Colonic mucosa (tissue), 4 donors: ENCODE measurements at regions of chr20 and their contacts with region 1.

Region 1: DNA sequence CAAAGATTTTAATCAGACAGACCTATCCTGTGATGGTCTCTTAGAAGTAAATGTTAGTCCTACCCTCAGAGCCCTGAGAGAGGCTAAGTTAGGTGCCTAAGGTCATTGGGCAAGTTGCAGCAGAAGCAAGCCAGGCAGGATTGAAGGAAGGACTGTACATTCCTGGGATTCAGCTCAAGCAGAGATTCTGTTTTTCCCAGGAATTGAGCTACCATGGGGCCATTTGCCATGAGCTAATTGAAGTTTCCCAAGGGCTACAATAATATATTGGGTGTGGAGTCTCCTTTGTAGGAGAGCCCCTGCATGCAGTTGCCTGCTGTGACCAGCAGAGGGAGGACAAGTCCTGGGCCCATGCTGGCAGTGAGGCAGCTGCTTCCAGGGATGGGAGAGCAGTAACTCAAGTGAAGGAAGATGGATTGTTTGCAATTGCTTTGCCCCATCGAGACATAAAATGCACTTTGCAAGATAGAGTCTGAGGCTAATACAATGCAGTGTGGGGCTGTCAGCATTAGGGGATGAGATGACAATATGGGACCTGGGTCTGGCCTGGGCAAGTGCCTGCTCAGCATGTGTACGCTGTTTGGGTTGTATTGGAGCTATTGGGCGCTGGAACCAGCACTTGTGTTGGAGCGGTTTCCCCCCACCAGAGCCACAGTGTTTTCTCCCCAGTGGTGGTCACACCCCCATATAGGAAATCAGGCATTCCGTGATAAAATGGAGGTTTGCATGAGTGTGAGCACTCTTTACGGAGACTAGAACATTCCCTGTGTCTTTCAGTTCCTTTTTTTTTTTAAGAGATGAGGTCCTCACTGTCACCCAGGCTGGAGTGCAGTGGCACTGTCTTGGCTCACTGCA is 27.9 kb downstream of the DNMT3B start:
- DNase-seq: peak; percentile 77
- H3K4me3 ChIP-seq: no peak overlapping the region
- H3K27ac ChIP-seq: no peak overlapping the region
- H3K4me1 ChIP-seq: no peaks in the 10 kb centered on the region
- H3K27me3 ChIP-seq: no peaks in the 10 kb centered on the region
- CTCF ChIP-seq: peak; percentile 100

Region 2: DNA sequence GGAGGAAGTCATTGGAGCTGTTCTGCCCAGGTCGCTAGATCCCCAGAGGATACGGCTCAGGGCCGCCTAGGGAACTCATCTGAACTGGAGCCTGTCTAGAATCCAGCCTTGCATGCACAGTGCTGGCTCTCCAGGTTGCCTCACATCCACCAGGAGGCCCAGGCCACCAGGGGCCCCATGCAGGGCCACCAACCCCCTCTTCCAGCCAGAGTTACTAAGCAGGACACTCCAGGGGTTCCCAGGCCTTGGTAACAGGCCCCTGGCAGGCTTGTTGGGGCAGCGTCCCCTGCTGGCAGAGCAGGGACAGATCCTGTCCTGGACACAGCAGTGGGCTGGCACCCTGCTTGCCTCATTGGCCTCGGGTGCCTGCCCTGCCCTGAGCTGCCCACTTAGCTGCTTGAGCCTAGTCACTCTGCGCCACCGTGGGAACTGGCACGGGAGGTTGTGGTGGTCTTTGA is 103.9 kb after region 1 on chr20:
- intact Hi-C with region 1: loop called (anchors 10 kb)
- DNase-seq: no peak
- H3K4me3 ChIP-seq: no peak overlapping the region
- H3K27ac ChIP-seq: no peak overlapping the region
- H3K4me1 ChIP-seq: no peaks in the 10 kb centered on the region
- H3K27me3 ChIP-seq: no peaks in the 10 kb centered on the region
- CTCF ChIP-seq: peak; percentile 27

Region 3: DNA sequence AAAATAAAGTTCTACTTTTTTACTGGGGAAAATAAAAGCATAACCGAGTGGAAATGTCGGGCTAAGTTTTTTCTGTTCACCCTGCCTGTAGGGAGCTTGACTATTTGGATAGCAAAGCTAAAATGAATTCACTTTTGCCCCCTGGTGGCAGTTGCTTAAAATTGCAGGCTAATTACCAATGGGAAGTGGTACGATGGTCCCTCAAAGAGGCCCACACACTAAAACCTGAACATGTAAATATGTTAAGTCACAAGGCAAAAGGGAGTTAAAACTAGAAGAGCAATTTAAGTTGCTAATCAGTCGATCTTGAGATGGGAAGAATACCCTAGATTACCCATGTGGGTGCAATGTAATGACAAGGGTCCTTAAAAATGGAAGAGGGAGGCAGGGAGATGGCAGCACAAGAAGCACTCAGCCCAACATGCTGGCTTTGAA is 215.0 kb after region 1 on chr20:
- intact Hi-C with region 1: loop called (anchors 10 kb)
- DNase-seq: peak; percentile 22
- H3K4me3 ChIP-seq: no peak overlapping the region
- H3K27ac ChIP-seq: no peak overlapping the region
- H3K4me1 ChIP-seq: no peaks in the 10 kb centered on the region
- H3K27me3 ChIP-seq: no peaks in the 10 kb centered on the region
- CTCF ChIP-seq: peak; percentile 45

Region 4: DNA sequence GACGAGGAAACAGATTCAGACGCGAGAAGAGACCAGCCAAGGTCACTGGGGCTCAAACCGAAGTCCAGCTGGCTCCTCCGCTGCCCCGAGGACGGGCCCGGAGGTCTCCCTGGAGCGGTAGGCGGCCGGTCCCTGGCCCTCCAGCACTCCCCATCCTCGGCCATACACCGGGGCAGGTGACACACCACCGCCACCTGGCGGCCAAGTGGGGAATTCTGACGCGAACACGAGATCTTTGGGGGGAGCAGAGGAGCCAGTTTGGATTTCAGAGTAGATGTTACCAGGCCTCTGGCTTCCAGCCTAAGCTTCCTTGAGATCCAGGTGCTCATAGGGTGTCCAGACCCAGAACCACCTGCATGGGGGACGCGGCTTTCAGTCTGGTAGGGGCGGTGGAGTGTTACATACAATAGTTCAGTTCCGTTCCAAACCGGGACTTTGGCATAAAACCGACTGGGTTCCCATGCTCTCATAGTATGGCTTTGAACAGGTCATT is 509.0 kb after region 1 on chr20:
- intact Hi-C with region 1: loop called (anchors 5 kb)
- DNase-seq: peak; percentile 61
- H3K4me3 ChIP-seq: no peak overlapping the region
- H3K27ac ChIP-seq: no peak overlapping the region
- H3K4me1 ChIP-seq: no peaks in the 10 kb centered on the region
- H3K27me3 ChIP-seq: no peaks in the 10 kb centered on the region
- CTCF ChIP-seq: peak; percentile 94